Activated CD4-positive, alpha-beta T cell treated with anti-CD3 and anti-CD28 coated beads for 36 hours (primary cell): ENCODE measurements at regions of chr16 and their contacts with region 1.

Region 1: DNA sequence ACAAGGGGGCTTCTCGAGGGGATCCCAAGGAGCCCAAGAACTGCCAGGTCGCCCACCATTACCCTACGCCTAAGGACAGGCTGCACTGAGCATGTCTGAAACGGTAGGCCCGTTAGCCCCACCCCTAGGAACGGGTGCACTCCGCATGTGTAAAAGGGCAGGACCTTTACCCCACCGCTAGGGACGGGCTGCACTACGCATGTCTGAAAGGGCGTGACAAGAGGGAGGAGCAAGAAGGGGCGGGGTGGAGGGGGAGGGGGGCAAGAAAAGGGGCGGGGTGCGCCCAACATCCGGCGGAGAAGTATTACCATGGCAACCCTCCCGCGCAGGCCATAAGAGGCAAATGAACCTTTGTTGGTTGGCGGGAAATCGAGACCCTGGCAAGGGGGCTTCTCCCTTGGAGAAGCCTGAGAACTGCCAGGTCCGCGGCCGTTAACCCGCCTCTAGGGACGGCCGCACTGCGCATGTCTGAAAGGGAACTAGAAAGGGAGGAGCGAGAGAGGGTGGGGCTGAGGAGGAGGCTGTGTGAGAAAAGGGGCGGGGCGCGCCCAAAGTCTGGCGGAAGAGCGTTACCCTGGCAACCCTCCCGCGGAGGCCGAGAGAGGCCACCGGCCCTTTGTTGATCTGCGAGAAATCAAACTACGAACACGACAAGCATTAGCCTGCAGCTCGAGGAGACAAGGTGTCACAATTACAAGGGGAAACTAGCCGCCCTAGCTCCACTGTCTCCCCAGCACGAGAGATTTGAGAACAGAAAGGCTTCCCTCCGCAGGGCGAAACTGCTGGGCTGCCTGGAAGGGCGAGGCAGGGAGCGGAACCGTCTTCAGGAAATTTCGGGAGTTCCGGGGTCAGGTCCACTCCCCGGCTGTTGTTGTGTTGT is 2046.8 kb downstream of the TP53TG3F start:
- DNase-seq: no peak
- ATAC-seq: no peak
- H3K4me3 Mint-ChIP-seq: no peak overlapping the region
- H3K27ac Mint-ChIP-seq: no peak overlapping the region
- H3K4me1 Mint-ChIP-seq: no peaks in the 10 kb centered on the region
- H3K27me3 Mint-ChIP-seq: no peaks in the 10 kb centered on the region

Region 2: GRCh38 chr16:35431829-35432663 is 74.2 kb before region 1 on chr16:
- CTCF ChIA-PET with region 1: no interaction called
- POLR2A ChIA-PET with region 1: no interaction called
- intact Hi-C with region 1: no loop called
- DNase-seq: peak; percentile 47
- ATAC-seq: no peak
- H3K4me3 Mint-ChIP-seq: no peak overlapping the region
- H3K27ac Mint-ChIP-seq: no peak overlapping the region
- H3K4me1 Mint-ChIP-seq: no peaks in the 10 kb centered on the region
- H3K27me3 Mint-ChIP-seq: no peaks in the 10 kb centered on the region

Region 3: DNA sequence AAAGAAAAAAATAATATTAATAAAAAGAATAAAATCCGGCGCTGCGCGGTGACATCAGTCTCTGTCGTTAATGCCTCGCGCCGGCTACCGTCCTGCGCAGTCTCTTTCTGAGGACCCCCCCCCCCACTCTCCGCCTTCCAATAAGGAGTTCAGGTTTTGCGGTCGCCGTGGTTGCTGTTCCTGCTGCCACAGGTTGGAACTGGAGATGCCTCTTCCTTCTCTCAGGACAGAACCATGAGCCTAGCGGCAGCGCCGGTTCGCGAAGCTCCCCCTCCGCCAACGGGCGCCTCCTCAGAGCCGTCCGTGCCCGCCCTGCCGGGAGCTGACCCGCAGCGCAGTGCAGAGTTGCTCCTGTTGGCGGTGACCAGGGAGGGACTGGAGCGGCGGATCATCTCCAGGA is 46.5 kb after region 1 on chr16:
- CTCF ChIA-PET with region 1: no interaction called
- POLR2A ChIA-PET with region 1: no interaction called
- intact Hi-C with region 1: loop called in 1 of 2 experiments (anchors 5 kb)
- DNase-seq: no peak
- ATAC-seq: no peak
- H3K4me3 Mint-ChIP-seq: no peak overlapping the region
- H3K27ac Mint-ChIP-seq: no peak overlapping the region
- H3K4me1 Mint-ChIP-seq: no peaks in the 10 kb centered on the region
- H3K27me3 Mint-ChIP-seq: no peaks in the 10 kb centered on the region

Region 4: GRCh38 chr16:35559911-35560636 is 53.8 kb after region 1 on chr16:
- CTCF ChIA-PET with region 1: no interaction called
- POLR2A ChIA-PET with region 1: no interaction called
- intact Hi-C with region 1: loop called in 1 of 2 experiments (anchors 5 kb)
- DNase-seq: no peak
- ATAC-seq: no peak
- H3K4me3 Mint-ChIP-seq: no peak overlapping the region
- H3K27ac Mint-ChIP-seq: no peak overlapping the region
- H3K4me1 Mint-ChIP-seq: no peaks in the 10 kb centered on the region
- H3K27me3 Mint-ChIP-seq: no peaks in the 10 kb centered on the region